ENCODE measurements at regions of chr7 and their contacts with region 1.

Region 1: GRCh38 chr7:95596198-95597063 is at the start of gene PDK4:
- DNase-seq: peak; percentile 98 to 99
- H3K4me3 ChIP-seq: peak within 1 kb of the TSS; percentile 89 to 90
- H3K27ac ChIP-seq: peak within 1 kb of the TSS; percentile 95 to 97
- H3K4me1 ChIP-seq: peaks cover 0 to 37% (median 13%) of the 10 kb centered on the region in 4 donors
- H3K27me3 ChIP-seq: no peaks in the 10 kb centered on the region
- CTCF ChIP-seq: no peak

Region 2: DNA sequence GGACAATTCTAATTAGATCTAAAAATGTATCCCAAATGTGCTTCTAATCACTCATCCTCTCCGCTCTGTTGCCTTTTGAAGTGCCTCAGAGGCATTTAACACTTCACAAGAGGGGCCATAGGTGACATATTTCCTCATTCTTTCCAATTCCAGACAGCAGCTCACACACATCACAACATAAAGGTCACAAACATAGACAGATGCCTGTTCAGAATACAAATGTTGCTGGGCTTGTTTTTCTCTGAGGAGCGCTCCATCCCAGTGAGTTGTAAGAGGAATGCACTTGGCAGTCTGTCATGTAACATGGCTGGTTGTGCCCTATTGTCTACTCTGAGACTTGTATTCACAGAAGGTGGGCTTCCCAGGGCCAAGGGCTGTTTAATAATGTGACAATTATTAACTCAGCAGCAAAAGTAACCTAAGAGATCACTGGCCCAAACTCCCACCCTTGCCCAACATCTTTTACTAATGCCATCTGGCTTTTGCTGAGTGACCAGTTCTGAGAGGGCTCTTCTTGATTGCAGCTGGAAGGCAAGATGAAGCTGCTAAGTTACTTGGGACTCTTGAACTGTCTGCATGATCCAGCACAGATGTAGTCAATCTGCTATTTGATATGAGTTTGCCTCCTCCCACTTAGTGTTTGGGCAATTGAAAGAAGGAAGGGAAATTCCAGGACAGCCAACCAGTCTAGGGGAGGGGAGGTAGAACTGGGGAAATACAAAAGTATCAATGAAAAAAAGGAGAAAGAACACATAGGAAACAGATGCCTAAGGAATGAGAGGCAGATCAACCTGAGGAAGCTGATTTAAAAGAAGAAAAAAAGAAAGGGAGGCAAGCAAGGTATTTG is 175.2 kb before region 1 on chr7:
- intact Hi-C with region 1: no loop called
- DNase-seq: no peak
- H3K4me3 ChIP-seq: no peak overlapping the region
- H3K27ac ChIP-seq: no peak overlapping the region
- H3K4me1 ChIP-seq: no peaks in the 10 kb centered on the region
- H3K27me3 ChIP-seq: no peaks in the 10 kb centered on the region
- CTCF ChIP-seq: no peak

Region 3: DNA sequence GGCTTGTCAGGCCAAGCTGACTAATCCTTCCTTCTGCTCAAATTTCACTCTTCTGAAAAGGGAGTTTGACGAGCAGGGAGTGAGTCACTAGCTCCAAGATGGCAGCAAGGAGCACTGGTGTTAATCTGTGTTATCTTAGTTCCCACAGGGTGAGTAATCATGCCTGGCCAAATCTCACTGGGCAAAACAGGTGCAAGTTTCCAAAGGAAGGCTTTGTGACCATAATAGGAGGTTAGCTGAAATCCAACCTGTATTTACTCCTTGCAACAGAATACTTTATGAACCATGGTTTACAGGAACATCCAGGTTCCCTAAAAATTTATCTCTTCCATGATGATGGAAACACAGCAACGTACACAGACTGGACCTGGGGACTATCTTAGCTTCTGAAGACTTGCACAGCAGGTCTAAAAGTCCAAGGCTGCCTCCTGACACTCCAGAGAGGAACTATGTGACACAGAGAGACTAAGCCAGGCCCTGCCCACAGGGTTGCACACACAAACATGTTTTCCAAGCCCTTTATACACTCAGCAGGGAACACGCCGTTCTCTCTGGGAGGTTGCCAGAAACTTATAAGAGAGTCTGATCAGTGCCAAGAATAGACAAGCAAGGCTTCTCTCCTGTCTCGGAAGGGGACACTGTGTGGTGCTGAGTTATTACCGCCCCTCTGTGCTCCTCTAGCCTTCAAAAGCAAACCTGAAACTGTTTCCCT is 46.5 kb before region 1 on chr7:
- intact Hi-C with region 1: loop called (anchors 1 kb)
- DNase-seq: peak; percentile 97 to 99
- H3K4me3 ChIP-seq: no peak overlapping the region
- H3K27ac ChIP-seq: peak overlapping the region; percentile 84 to 88
- H3K4me1 ChIP-seq: peaks cover 0 to 77% (median 55%) of the 10 kb centered on the region in 4 donors
- H3K27me3 ChIP-seq: no peaks in the 10 kb centered on the region
- CTCF ChIP-seq: no peak

Region 4: DNA sequence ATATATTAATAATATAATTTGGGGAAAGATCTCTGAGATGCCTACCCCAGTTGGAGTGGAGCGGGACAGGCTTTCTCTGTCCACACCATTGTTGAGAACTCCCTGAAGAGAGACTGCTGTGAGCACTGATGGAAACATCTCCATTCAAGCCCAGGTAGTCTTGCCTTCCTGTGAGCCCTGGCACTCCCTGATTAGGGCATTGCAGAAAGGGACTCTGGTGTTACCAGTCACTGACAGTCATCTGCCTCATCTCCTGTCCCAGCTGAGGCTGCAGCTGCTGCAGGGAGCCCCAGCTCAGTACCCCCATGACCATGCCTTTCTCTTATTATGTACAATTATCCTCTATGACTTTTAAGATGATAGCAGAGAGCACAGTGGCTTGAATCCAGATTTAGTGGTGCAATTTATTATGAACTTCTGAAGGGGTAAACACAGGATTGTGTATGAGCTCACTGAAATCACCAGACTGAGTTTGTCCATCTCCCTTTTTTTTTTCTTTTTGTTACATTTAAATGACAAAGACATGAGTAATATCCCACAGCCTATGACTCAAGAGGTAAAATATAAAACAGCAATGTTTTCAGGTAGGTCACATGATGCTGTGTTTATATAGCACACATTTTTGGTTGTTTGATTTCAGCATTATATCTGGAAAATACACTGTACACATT is 488.6 kb after region 1 on chr7:
- intact Hi-C with region 1: no loop called
- DNase-seq: no peak
- H3K4me3 ChIP-seq: no peak overlapping the region
- H3K27ac ChIP-seq: no peak overlapping the region
- H3K4me1 ChIP-seq: peaks cover 0 to 16% (median 0%) of the 10 kb centered on the region in 4 donors
- H3K27me3 ChIP-seq: no peaks in the 10 kb centered on the region
- CTCF ChIP-seq: no peak